Dendritic cell treated with granulocyte-macrophage colony-stimulating factor and Interleukin-4, amounts not matched to agents 40 ng/mL and 50 ng/mL, for 4 days (primary cell): ENCODE measurements at regions of chr14 and their contacts with region 1.

Region 1: GRCh38 chr14:76876076-76876475 is 49.9 kb downstream of the LRRC74A start:
- H3K4me3 Mint-ChIP-seq: no peak overlapping the region
- H3K27ac Mint-ChIP-seq: no peak overlapping the region
- H3K4me1 Mint-ChIP-seq: no peaks in the 10 kb centered on the region
- H3K27me3 Mint-ChIP-seq: peaks cover 4% of the 10 kb centered on the region

Region 2: GRCh38 chr14:76352639-76353281 is 523.3 kb before region 1 on chr14:
- intact Hi-C with region 1: no loop called
- H3K4me3 Mint-ChIP-seq: peak overlapping the region; percentile 59
- H3K27ac Mint-ChIP-seq: no peak overlapping the region
- H3K4me1 Mint-ChIP-seq: peaks cover 5% of the 10 kb centered on the region
- H3K27me3 Mint-ChIP-seq: peaks cover 32% of the 10 kb centered on the region

Region 3: DNA sequence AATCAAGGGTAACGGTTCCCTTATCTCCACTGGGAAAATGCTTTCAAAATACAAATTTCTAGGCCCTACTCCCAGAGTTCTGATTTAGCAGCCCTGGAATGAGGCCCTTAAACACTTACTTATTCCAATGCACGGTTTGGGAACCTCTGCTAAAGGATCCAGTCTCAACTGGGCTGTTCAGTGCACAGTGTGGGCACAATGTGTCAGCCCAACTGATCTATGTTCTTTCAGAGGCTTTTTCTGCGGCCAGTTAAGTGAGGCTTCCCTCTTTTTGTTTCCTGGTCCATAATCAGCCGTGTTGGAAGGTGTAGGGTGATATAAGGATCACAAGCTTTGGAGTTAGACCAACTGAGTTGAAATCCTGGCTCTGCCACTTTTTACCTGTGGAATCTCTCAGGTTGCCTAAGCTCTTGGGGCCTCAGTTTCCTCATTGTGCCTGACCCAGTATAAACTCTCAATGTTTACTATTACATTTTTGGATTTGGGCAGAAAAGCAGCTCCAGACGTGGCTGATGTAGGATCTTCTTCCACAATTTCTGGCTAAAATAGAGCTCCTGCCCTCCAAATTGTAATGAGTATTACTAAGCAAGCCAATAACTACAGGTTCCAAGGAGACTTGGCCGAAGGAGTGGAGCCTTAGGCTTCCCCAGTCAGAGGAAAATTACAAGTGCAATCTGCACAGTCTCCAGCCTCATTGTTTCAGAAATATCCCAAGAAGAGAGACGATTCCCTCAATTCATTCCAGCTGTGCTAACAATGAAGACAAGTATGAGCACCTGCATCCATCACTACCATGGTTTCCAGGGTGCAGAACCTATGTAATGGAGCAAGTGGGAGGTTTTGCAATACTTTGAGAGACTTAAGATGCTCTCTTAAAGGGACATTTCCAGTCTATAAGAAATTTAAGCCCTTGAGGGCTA is 61.1 kb before region 1 on chr14:
- intact Hi-C with region 1: no loop called
- H3K4me3 Mint-ChIP-seq: no peak overlapping the region
- H3K27ac Mint-ChIP-seq: no peak overlapping the region
- H3K4me1 Mint-ChIP-seq: peaks cover 26% of the 10 kb centered on the region
- H3K27me3 Mint-ChIP-seq: no peaks in the 10 kb centered on the region

Region 4: GRCh38 chr14:76908834-76909233 is 32.8 kb after region 1 on chr14:
- intact Hi-C with region 1: loop called (anchors 2 kb)
- H3K4me3 Mint-ChIP-seq: no peak overlapping the region
- H3K27ac Mint-ChIP-seq: peak overlapping the region; percentile 77
- H3K4me1 Mint-ChIP-seq: peaks cover 35% of the 10 kb centered on the region
- H3K27me3 Mint-ChIP-seq: no peaks in the 10 kb centered on the region

Region 5: DNA sequence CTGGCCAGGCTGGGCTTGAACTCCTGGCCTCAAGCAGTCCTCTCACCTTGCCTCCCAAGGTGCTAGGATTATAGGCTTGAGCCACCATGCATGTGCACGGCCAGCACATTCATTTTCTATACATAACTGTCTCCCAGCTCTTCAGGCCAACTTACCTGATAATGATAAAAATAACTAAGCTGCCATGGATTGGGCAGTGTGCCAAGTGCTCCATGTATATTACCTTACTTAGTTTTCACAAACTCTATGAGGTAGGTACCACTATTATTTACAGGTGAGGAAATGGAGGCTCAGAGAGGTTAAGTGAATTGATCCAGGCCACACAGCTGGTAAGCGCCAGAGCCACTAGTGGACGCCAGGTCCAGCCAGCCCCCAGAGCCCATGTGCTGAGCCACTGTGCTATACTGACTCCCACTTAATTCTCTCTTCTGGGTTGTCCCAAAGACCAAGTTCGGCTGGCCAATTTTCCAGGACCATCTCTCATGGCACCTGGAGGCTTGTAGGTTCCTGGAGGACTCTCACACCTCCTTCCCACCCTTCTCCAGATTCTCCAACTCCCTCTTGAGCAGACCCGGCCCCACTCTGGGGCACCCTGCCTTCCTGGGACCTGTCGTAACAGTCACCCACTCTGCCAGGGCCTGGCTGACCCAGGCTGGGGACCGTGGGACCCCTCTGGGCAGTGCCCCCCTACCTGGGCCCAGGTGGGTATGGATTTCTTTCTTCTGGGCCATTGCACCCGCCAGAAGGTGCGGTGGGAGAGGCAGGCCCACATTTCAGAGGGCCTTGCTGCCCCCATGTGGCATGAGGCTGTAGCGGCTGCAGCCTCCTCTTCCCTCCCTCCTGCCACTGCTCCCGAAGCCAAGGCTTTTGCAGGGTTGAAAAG is 191.8 kb after region 1 on chr14:
- intact Hi-C with region 1: loop called (anchors 1 kb)
- H3K4me3 Mint-ChIP-seq: no peak overlapping the region
- H3K27ac Mint-ChIP-seq: no peak overlapping the region
- H3K4me1 Mint-ChIP-seq: peaks cover 32% of the 10 kb centered on the region
- H3K27me3 Mint-ChIP-seq: peaks cover 22% of the 10 kb centered on the region

Region 6: DNA sequence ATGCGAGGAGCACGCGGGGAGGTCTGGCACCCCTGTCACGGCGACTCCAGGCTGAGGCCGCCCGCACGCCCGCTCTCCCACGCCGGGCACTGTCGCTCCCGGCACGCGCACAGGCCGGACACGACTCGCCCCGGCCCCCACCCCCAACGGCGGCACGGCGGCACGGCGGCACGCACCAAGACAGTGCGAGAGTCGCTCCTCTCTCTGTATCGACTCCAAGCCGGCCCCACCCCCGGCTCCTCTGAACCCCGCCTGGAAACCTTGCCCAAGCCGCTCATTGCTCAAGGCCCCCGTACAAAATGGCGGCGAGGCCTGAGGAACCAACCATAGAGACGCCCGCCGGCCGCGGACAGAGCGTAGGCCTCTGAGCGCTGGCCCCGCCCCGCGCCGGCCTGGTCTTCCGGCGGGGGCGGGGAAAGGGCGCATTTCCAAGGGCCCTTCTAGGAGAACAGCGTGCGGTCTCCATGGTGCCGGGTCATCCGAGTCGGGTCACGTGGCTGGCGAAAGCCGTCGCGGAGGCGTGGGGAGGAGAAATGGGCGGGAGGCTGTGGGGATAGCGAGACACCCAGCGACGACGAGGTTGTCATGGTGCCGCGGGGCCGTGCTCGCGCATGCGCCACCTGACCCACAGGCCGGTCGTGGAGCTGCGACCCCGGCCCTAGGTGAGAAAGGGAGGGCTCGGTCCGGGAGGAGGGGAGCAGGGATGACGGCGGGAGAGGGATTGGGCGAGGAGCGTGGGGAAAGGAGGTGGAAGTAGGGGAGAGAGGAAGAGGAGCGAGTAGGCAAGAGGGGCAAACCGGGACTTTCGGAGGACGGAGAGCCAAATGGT is 221.8 kb after region 1 on chr14 and contains the start of gene CIPC:
- intact Hi-C with region 1: loop called (anchors 1 kb)
- H3K4me3 Mint-ChIP-seq: peak within 1 kb of the TSS; percentile 100
- H3K27ac Mint-ChIP-seq: peak within 1 kb of the TSS; percentile 100
- H3K4me1 Mint-ChIP-seq: peaks cover 66% of the 10 kb centered on the region
- H3K27me3 Mint-ChIP-seq: no peaks in the 10 kb centered on the region

Region 7: GRCh38 chr14:77290741-77291140 is 414.7 kb after region 1 on chr14:
- intact Hi-C with region 1: no loop called
- H3K4me3 Mint-ChIP-seq: no peak overlapping the region
- H3K27ac Mint-ChIP-seq: no peak overlapping the region
- H3K4me1 Mint-ChIP-seq: peaks cover 8% of the 10 kb centered on the region
- H3K27me3 Mint-ChIP-seq: no peaks in the 10 kb centered on the region